Naive thymus-derived CD4-positive, alpha-beta T cell (primary cell): ENCODE measurements at regions of chr6 and their contacts with region 1.

Region 1: GRCh38 chr6:19159089-19159488 is 678.1 kb upstream of the ID4 start:
- DNase-seq: no peak
- ATAC-seq: no peak
- H3K4me3 ChIP-seq: no peak overlapping the region
- H3K4me3 Mint-ChIP-seq: no peak overlapping the region
- H3K27ac ChIP-seq: no peak overlapping the region
- H3K27ac Mint-ChIP-seq: no peak overlapping the region
- H3K4me1 ChIP-seq: no peaks in the 10 kb centered on the region
- H3K4me1 Mint-ChIP-seq: no peaks in the 10 kb centered on the region
- H3K27me3 ChIP-seq: no peaks in the 10 kb centered on the region
- H3K27me3 Mint-ChIP-seq: no peaks in the 10 kb centered on the region

Region 2: GRCh38 chr6:19083809-19084208 is 75.3 kb before region 1 on chr6:
- CTCF ChIA-PET with region 1: no interaction called
- POLR2A ChIA-PET with region 1: no interaction called
- intact Hi-C with region 1: no loop called
- DNase-seq: no peak
- ATAC-seq: no peak
- H3K4me3 ChIP-seq: no peak overlapping the region
- H3K4me3 Mint-ChIP-seq: no peak overlapping the region
- H3K27ac ChIP-seq: no peak overlapping the region
- H3K27ac Mint-ChIP-seq: no peak overlapping the region
- H3K4me1 ChIP-seq: no peaks in the 10 kb centered on the region
- H3K4me1 Mint-ChIP-seq: no peaks in the 10 kb centered on the region
- H3K27me3 ChIP-seq: no peaks in the 10 kb centered on the region
- H3K27me3 Mint-ChIP-seq: peaks cover 0 to 4% (median 0%) of the 10 kb centered on the region in 5 donors

Region 3: DNA sequence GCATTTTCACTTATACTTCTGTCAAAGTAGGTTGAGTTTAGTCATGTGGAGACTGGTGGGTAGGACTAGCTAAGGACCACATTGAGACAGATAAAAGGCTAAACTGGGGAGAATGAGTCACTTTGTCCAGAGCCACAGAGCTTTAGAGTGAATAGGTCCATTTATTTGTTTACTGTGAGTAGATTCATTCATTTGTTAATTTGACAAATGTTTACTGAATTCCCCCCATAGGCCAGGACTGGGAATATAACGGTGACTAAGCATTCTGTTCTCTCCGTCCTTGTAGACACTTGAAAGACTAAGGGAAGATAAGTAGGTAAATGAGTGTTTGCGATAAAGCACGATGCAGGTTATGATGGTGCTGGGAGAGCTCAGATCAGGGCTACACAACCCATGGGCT is 21.6 kb before region 1 on chr6:
- CTCF ChIA-PET with region 1: no interaction called
- POLR2A ChIA-PET with region 1: no interaction called
- intact Hi-C with region 1: loop called in 1 of 2 experiments (anchors 2 kb)
- DNase-seq: no peak
- ATAC-seq: no peak
- H3K4me3 ChIP-seq: no peak overlapping the region
- H3K4me3 Mint-ChIP-seq: no peak overlapping the region
- H3K27ac ChIP-seq: no peak overlapping the region
- H3K27ac Mint-ChIP-seq: no peak overlapping the region
- H3K4me1 ChIP-seq: no peaks in the 10 kb centered on the region
- H3K4me1 Mint-ChIP-seq: no peaks in the 10 kb centered on the region
- H3K27me3 ChIP-seq: no peaks in the 10 kb centered on the region
- H3K27me3 Mint-ChIP-seq: no peaks in the 10 kb centered on the region